ENCODE measurements at regions of chr19 and their contacts with region 1.

Region 1: GRCh38 chr19:12736995-12737834 is at the start of gene GET3:
- DNase-seq: peak; percentile 91

Region 2: GRCh38 chr19:12722566-12723380 is 14.4 kb before region 1 on chr19:
- CTCF ChIA-PET with region 1: interaction called, 4 read pairs
- POLR2A ChIA-PET with region 1: interaction called, 133 read pairs
- DNase-seq: peak; percentile 90

Region 3: DNA sequence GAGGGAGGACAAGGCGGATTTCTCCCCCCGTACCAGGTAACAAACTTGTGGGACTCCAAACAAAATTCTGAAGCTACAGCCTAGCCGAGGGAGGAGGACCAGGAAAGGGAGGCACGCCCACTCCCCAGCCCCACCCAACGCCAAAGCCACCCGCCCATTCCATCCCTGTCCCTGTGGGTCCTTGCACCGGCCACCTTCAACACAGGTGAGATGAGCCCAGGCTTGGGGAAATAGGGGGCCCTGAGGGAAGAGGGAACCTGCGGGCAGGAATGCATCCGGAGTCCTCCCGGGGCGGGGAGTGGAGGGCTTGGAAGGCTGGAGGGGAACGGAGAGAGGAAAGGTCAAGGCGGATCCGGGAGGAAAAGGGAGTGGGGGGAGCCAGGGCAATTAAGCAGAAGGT is 14.4 kb after region 1 on chr19 and contains the start of gene BEST2:
- CTCF ChIA-PET with region 1: no interaction called
- POLR2A ChIA-PET with region 1: interaction called, 15 read pairs
- DNase-seq: no peak

Region 4: GRCh38 chr19:13082192-13083007 is 345.2 kb after region 1 on chr19:
- CTCF ChIA-PET with region 1: no interaction called
- POLR2A ChIA-PET with region 1: no interaction called
- DNase-seq: peak; percentile 52